T-cell (primary cell): ENCODE measurements at regions of chr13 and their contacts with region 1.

Region 1: GRCh38 chr13:31150315-31150985 is 11.3 kb downstream of the HSPH1 start:
- DNase-seq: no peak
- ATAC-seq: no peak
- H3K4me3 ChIP-seq: no peak overlapping the region
- H3K4me3 Mint-ChIP-seq: peak overlapping the region in 1 of 3 donors; percentile 7
- H3K27ac ChIP-seq: no peak overlapping the region
- H3K27ac Mint-ChIP-seq: no peak overlapping the region
- H3K4me1 ChIP-seq: no peaks in the 10 kb centered on the region
- H3K4me1 Mint-ChIP-seq: peaks cover 14 to 34% (median 18%) of the 10 kb centered on the region in 3 donors
- H3K27me3 ChIP-seq: no peaks in the 10 kb centered on the region
- H3K27me3 Mint-ChIP-seq: no peaks in the 10 kb centered on the region

Region 2: DNA sequence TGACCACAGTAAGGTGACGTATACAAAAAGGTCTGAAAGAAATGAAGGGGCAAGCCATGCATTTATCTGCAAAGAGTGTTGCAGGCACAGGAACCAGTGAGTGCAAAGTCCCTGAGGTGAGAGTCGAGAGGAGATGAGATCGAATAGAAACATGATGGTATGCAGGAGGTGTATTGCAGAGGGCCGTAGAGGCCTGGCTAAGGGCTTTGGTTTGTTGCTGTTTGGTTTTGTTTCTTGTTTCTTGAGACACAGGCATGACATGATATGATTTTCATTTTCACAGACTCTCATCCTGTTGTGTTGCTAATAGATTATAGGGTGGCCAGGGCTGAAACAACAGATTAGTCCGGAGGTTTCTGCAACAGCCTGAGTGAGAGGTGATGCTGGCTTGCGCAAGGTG is 69.1 kb before region 1 on chr13:
- CTCF ChIA-PET with region 1: no interaction called
- POLR2A ChIA-PET with region 1: no interaction called
- DNase-seq: no peak
- ATAC-seq: no peak
- H3K4me3 ChIP-seq: no peak overlapping the region
- H3K4me3 Mint-ChIP-seq: no peak overlapping the region
- H3K27ac ChIP-seq: no peak overlapping the region
- H3K27ac Mint-ChIP-seq: no peak overlapping the region
- H3K4me1 ChIP-seq: no peaks in the 10 kb centered on the region
- H3K4me1 Mint-ChIP-seq: no peaks in the 10 kb centered on the region
- H3K27me3 ChIP-seq: peaks cover 4 to 7% of the 10 kb centered on the region in 2 experiments
- H3K27me3 Mint-ChIP-seq: peaks cover 14 to 21% of the 10 kb centered on the region in 2 donors

Region 3: GRCh38 chr13:31138515-31138914 is 11.9 kb before region 1 on chr13:
- CTCF ChIA-PET with region 1: interaction called in 1 of 2 experiments, 5 read pairs
- POLR2A ChIA-PET with region 1: interaction called, 6 to 12 read pairs
- DNase-seq: no peak
- ATAC-seq: no peak
- H3K4me3 ChIP-seq: no peak overlapping the region
- H3K4me3 Mint-ChIP-seq: no peak overlapping the region
- H3K27ac ChIP-seq: no peak overlapping the region
- H3K27ac Mint-ChIP-seq: no peak overlapping the region
- H3K4me1 ChIP-seq: peaks cover 0 to 2% of the 10 kb centered on the region in 2 experiments
- H3K4me1 Mint-ChIP-seq: peaks cover 13 to 29% (median 14%) of the 10 kb centered on the region in 3 donors
- H3K27me3 ChIP-seq: no peaks in the 10 kb centered on the region
- H3K27me3 Mint-ChIP-seq: no peaks in the 10 kb centered on the region

Region 4: DNA sequence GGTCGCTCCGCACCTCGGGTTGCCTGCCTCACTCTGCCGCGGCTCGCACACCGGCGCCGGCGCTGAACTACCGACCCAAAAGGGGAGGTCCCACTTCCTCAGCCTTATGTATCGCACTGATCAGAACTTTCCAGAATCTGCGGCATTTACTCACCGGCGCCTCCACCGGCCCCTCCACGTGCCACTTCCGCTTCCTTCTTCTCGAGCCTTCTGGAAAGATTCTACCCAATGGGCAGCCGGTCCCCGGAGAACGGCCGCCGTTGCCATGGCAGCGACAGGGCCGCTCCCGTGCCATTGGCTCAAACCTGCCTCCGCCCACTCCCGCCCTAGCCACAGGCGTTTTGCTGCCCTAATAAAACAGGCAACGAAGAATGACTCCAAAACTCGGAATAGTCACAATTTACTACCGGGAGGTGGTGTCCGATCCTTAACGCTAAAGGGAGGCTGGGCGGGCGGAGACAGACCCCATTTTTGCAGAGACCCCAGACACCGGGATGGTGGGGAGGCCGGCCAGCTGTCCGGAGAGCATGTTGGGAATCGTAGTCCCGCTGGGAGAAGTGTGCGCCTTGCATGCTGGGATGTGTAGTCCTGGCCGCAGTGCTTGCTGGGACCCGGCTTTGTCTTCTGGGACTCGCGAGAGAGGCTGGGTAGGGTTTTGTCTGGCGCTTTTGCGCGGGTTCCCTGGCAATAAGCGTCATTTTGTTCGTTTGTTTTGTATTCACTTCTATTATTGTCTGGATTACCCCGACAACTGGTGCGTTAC is 11.6 kb after region 1 on chr13 and contains the start of gene HSPH1:
- CTCF ChIA-PET with region 1: interaction called in 1 of 2 experiments, 3 read pairs
- POLR2A ChIA-PET with region 1: interaction called, 12 to 15 read pairs
- DNase-seq: peak; percentile 96 to 99 (median 98)
- ATAC-seq: peak; percentile 85 to 89 (median 87)
- H3K4me3 ChIP-seq: peak within 1 kb of the TSS; percentile 66 to 89
- H3K4me3 Mint-ChIP-seq: peak within 1 kb of the TSS; percentile 95 to 97 (median 97)
- H3K27ac ChIP-seq: peak within 1 kb of the TSS; percentile 100
- H3K27ac Mint-ChIP-seq: peak within 1 kb of the TSS; percentile 96 to 99
- H3K4me1 ChIP-seq: peaks cover 11 to 31% of the 10 kb centered on the region in 2 experiments
- H3K4me1 Mint-ChIP-seq: peaks cover 42 to 45% (median 43%) of the 10 kb centered on the region in 3 donors
- H3K27me3 ChIP-seq: no peaks in the 10 kb centered on the region
- H3K27me3 Mint-ChIP-seq: no peaks in the 10 kb centered on the region
- total RNA-seq, gene HSPH1: 54.5 to 141 (median 72.8) TPM

Region 5: DNA sequence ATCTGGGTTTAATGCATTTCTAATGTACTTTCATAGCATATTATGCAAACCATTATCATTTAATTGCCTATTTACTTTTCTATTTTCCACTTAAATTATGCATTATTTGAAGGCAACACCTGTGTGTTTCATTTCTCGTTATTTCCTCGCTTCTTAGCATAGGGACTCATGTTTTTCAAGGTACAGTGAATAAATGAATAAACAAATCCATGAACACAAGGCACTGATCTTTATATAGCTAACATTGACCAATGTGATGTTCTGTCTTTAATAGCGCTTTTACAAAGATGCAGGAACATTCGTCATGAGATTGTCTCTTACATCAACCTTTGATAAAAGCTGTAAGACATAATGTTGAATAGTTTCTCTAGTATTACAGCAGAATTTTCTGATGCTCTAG is 170.5 kb after region 1 on chr13:
- CTCF ChIA-PET with region 1: no interaction called
- POLR2A ChIA-PET with region 1: no interaction called
- DNase-seq: no peak
- ATAC-seq: no peak
- H3K4me3 ChIP-seq: no peak overlapping the region
- H3K4me3 Mint-ChIP-seq: no peak overlapping the region
- H3K27ac ChIP-seq: no peak overlapping the region
- H3K27ac Mint-ChIP-seq: no peak overlapping the region
- H3K4me1 ChIP-seq: no peaks in the 10 kb centered on the region
- H3K4me1 Mint-ChIP-seq: no peaks in the 10 kb centered on the region
- H3K27me3 ChIP-seq: no peaks in the 10 kb centered on the region
- H3K27me3 Mint-ChIP-seq: no peaks in the 10 kb centered on the region

Region 6: DNA sequence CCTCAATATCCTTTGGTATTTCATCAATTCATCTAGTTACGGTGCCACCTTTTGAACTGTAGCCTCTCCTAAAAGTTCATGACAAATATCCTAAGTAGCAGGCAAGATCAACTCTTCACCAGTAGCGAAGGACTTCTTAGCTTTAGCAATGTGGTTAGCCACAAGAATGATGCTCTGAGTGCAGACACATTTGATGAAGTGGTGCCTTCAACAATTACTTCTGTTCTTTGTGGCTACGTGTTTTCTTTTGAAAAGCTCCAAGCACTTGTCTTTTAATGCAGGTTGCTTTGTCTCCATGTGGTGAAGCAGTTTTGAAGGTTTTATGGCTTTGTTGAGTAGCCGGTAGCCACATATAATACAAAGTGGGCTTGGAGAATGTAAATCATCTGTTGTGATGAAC is 244.0 kb after region 1 on chr13:
- CTCF ChIA-PET with region 1: no interaction called
- POLR2A ChIA-PET with region 1: no interaction called
- DNase-seq: no peak
- ATAC-seq: no peak
- H3K4me3 ChIP-seq: no peak overlapping the region
- H3K4me3 Mint-ChIP-seq: no peak overlapping the region
- H3K27ac ChIP-seq: no peak overlapping the region
- H3K27ac Mint-ChIP-seq: no peak overlapping the region
- H3K4me1 ChIP-seq: no peaks in the 10 kb centered on the region
- H3K4me1 Mint-ChIP-seq: no peaks in the 10 kb centered on the region
- H3K27me3 ChIP-seq: peaks cover 0 to 2% of the 10 kb centered on the region in 2 experiments
- H3K27me3 Mint-ChIP-seq: no peaks in the 10 kb centered on the region